Heart left ventricle (tissue), 16 donors: ENCODE measurements at regions of chr2 and their contacts with region 1.

Region 1: GRCh38 chr2:224145751-224146355 is 106.8 kb upstream of the SERPINE2 start:
- DNase-seq: peak in 3 of 5 donors; percentile 36 to 68 (median 44)
- ATAC-seq: peak; percentile 32 to 88 (median 86)
- H3K4me3 ChIP-seq: no peak overlapping the region
- H3K27ac ChIP-seq: peak overlapping the region in 6 of 12 donors; percentile 13 to 82 (median 48)
- H3K4me1 ChIP-seq: peaks cover 0 to 21% (median 2%) of the 10 kb centered on the region in 12 donors
- H3K27me3 ChIP-seq: no peaks in the 10 kb centered on the region
- CTCF ChIP-seq: no peak
- POLR2A ChIP-seq: no peak

Region 2: DNA sequence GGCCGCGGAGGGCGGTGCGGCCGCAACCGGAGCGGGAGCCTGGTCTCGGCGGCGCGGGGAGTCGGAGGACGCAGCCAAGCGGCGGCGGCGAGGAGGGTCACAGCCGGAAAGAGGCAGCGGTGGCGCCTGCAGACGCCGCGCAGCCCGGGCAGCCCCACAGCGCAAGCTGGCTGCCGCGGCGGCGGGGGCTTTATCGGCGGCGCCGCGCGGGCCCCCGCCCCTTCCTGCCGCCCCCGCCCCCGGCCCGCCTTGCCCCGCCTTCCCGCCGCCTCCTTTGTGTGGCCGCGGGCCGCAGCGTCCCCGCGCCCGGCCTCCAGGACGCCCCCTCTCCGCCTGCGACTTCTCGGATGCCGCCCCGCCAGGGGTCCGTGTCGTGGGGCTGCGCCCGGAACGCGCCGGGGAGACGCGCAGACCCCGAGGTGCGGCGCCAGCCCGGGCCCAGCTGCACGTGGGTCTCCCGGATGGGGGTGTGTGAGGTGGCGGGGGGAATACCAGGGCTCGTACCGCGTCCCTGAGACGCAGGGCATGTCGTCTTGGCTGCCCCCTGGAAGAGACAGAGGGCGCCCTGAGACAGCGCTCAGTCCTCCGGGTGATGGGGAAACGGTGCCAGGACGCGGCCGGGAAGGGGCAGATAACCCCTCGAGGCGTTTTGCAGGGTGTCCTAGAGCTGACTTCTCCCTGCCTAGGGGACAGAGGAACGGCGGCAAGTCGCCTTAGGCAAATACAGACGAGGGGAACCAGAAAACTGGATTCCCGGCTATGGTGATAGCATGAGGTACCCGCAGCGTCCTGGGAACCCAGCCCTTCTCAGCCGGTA is 106.5 kb before region 1 on chr2 and contains the start of gene SERPINE2:
- intact Hi-C with region 1: loop called in 1 of 10 experiments (anchors 5 kb)
- DNase-seq: peak; percentile 55 to 71 (median 60)
- ATAC-seq: peak; percentile 52 to 82 (median 78)
- H3K4me3 ChIP-seq: peak within 1 kb of the TSS; percentile 56 to 88 (median 70)
- H3K27ac ChIP-seq: peak within 1 kb of the TSS in 11 of 12 donors; percentile 30 to 79 (median 50)
- H3K4me1 ChIP-seq: peaks cover 0 to 28% (median 7%) of the 10 kb centered on the region in 12 donors
- H3K27me3 ChIP-seq: peaks cover 0 to 53% (median 15%) of the 10 kb centered on the region in 9 donors
- CTCF ChIP-seq: peak in 9 of 12 donors; percentile 21 to 54 (median 41)
- POLR2A ChIP-seq: peak in 1 of 2 donors; percentile 36
- total RNA-seq, gene SERPINE2: 10.7 to 61.7 (median 22.1) TPM

Region 3: DNA sequence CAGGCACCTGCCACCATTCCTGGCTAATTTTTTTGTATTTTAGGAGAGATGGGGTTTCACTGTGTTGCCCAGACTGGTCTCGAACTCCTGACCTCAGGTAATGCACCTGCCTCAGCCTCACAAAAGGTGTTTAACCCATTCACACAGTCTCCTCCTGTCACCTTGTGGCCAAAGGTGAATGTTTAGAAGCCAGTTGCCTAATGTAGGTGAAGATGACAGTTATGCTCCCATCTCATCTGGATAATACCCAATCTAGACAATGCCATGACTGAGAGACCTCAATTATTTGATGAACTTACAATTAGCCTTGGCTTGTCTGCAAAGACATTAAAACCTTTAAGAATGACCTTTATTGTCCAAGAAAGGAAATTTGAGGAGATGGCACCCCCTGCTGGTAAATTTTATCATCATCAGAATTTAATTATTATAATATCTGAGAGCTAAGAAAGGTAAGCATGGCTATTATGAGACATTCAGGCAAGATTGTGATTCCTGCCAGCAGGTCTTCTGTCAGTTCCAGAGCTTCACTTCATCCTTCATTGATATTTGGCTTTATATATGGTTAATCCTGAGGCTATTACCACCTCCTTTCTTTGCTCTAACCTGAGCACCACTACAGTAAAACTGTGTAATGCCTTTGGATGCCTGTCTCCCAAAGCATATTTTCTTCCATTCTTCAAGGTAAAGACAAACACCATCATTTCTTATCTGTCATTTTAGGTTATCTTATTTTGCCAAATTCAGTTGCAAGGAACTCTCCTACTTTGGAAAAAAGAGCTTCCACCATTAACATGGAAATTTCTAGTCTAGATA is 138.5 kb after region 1 on chr2:
- intact Hi-C with region 1: loop called in 1 of 10 experiments (anchors 10 kb)
- DNase-seq: no peak
- ATAC-seq: peak in 1 of 4 donors; percentile 47
- H3K4me3 ChIP-seq: no peak overlapping the region
- H3K27ac ChIP-seq: no peak overlapping the region
- H3K4me1 ChIP-seq: peaks cover 0 to 15% (median 0%) of the 10 kb centered on the region in 12 donors
- H3K27me3 ChIP-seq: peaks cover 0 to 16% (median 2%) of the 10 kb centered on the region in 9 donors
- CTCF ChIP-seq: peak; percentile 53 to 84 (median 66)
- POLR2A ChIP-seq: no peak